A549 (cell line): ENCODE measurements at regions of chr6 and their contacts with region 1.

Region 1: GRCh38 chr6:81847866-81848265 is 95.4 kb upstream of the TENT5A start:
- DNase-seq: no peak
- ATAC-seq: no peak
- H3K4me3 ChIP-seq: no peak overlapping the region
- H3K27ac ChIP-seq: no peak overlapping the region
- H3K4me1 ChIP-seq: no peaks in the 10 kb centered on the region
- CTCF ChIP-seq: no peak
- EP300 ChIP-seq: no peak
- POLR2A ChIP-seq: no peak
- RAD21 ChIP-seq: no peak

Region 2: GRCh38 chr6:81906709-81907204 is 58.9 kb after region 1 on chr6:
- CTCF ChIA-PET with region 1: no interaction called
- POLR2A ChIA-PET with region 1: interaction called, 12 read pairs
- DNase-seq: no peak
- ATAC-seq: no peak
- H3K4me3 ChIP-seq: no peak overlapping the region
- H3K27ac ChIP-seq: no peak overlapping the region
- H3K4me1 ChIP-seq: no peaks in the 10 kb centered on the region
- CTCF ChIP-seq: no peak
- EP300 ChIP-seq: no peak
- POLR2A ChIP-seq: no peak
- RAD21 ChIP-seq: no peak